ENCODE measurements at regions of chr5 and their contacts with region 1.

Region 1: DNA sequence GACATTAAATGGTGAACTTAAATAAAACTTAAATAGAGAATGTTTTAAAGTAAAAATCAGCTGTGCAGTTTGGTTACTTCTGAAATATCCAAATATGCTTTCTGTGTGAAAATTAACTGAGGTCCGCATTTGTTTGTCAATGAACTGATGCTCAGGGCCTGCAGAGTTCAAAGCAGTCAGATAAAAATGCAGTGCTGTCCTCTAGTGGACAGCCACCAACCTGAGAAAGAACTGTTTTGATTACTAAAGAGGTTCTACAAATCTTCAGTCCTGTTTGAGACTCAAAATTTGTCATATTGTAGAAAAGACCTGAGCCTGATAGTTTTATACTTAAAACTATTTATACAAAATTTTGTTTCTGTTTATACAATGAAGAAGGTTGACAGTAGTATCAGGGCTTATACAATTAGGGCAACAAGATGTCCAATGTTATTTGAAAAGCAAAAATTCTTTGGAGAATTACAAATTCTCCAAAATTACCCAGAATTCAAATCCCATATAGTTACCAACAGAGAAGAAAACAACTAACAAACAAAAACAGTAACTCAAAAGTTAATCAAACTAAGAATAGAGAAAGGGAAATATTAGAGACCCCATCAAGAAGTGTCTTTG is 232.3 kb upstream of the TBCA start:
- DNase-seq: peak in 1 of 2 experiments; percentile 38
- H3K4me3 ChIP-seq: no peak overlapping the region
- H3K4me3 Mint-ChIP-seq: no peak overlapping the region
- H3K27ac Mint-ChIP-seq: no peak overlapping the region
- H3K4me1 ChIP-seq: no peaks in the 10 kb centered on the region
- H3K4me1 Mint-ChIP-seq: no peaks in the 10 kb centered on the region
- H3K27me3 ChIP-seq: no peaks in the 10 kb centered on the region
- H3K27me3 Mint-ChIP-seq: no peaks in the 10 kb centered on the region
- CTCF ChIP-seq: peak; percentile 75 to 96

Region 2: GRCh38 chr5:77518304-77518703 is 490.2 kb before region 1 on chr5:
- CTCF ChIA-PET with region 1: no interaction called
- POLR2A ChIA-PET with region 1: no interaction called
- intact Hi-C with region 1: loop called (anchors 1 kb)
- DNase-seq: no peak
- H3K4me3 ChIP-seq: no peak overlapping the region
- H3K4me3 Mint-ChIP-seq: no peak overlapping the region
- H3K27ac Mint-ChIP-seq: no peak overlapping the region
- H3K4me1 ChIP-seq: no peaks in the 10 kb centered on the region
- H3K4me1 Mint-ChIP-seq: no peaks in the 10 kb centered on the region
- H3K27me3 ChIP-seq: no peaks in the 10 kb centered on the region
- H3K27me3 Mint-ChIP-seq: peaks cover 12% of the 10 kb centered on the region
- CTCF ChIP-seq: peak; percentile 33 to 51

Region 3: DNA sequence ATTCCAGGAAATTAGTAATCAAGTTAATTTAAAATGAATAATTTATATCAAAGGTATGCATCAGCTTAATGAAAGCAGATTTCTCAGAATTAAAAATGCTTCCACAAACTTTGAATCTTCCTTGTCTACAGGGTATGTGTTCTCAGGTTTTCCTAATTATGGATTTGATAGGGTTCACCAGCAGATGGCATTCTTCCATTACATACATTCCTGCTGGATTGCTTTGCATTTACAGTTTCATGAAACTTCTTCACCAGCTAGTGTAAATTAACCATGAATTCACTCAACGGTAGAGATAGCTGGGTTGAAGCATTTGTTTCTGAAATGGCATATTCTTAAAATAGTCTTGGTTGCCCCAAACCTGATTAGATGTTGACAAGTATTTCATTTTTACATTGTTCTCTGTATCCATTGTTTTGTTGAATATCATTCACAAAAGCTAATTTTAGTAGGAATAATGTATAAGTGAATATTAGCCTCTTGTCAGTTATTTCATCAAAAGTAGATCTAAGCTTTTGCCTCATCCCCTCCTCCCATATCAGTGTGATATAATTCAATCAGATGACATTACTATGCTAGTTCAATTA is 447.7 kb before region 1 on chr5:
- CTCF ChIA-PET with region 1: interaction called, 3 read pairs
- POLR2A ChIA-PET with region 1: no interaction called
- intact Hi-C with region 1: loop called (anchors 1 kb)
- DNase-seq: peak in 1 of 2 experiments; percentile 35
- H3K4me3 ChIP-seq: no peak overlapping the region
- H3K4me3 Mint-ChIP-seq: no peak overlapping the region
- H3K27ac Mint-ChIP-seq: no peak overlapping the region
- H3K4me1 ChIP-seq: 0 out of 2 replicates have a peak, but pooled peaks cover 4% of the 10 kb centered on the region
- H3K4me1 Mint-ChIP-seq: no peaks in the 10 kb centered on the region
- H3K27me3 ChIP-seq: no peaks in the 10 kb centered on the region; the same call in 1 of the 2 replicates
- H3K27me3 Mint-ChIP-seq: peaks cover 6% of the 10 kb centered on the region
- CTCF ChIP-seq: peak; percentile 56 to 73

Region 4: GRCh38 chr5:77645158-77645994 is 363.1 kb before region 1 on chr5:
- CTCF ChIA-PET with region 1: interaction called, 3 read pairs
- POLR2A ChIA-PET with region 1: no interaction called
- intact Hi-C with region 1: loop called (anchors 5 kb)
- DNase-seq: peak in 1 of 2 experiments; percentile 87
- H3K4me3 ChIP-seq: peak overlapping the region; percentile 43
- H3K4me3 Mint-ChIP-seq: peak overlapping the region; percentile 64
- H3K27ac Mint-ChIP-seq: no peak overlapping the region
- H3K4me1 ChIP-seq: peaks cover 10% of the 10 kb centered on the region; the same call in 1 of the 2 replicates
- H3K4me1 Mint-ChIP-seq: peaks cover 13% of the 10 kb centered on the region
- H3K27me3 ChIP-seq: no peaks in the 10 kb centered on the region; the same call in 1 of the 2 replicates
- H3K27me3 Mint-ChIP-seq: peaks cover 46% of the 10 kb centered on the region
- CTCF ChIP-seq: peak; percentile 34 to 53

Region 5: GRCh38 chr5:77718934-77719610 is 289.4 kb before region 1 on chr5:
- CTCF ChIA-PET with region 1: no interaction called
- POLR2A ChIA-PET with region 1: no interaction called
- intact Hi-C with region 1: no loop called
- DNase-seq: no peak
- H3K4me3 ChIP-seq: no peak overlapping the region
- H3K4me3 Mint-ChIP-seq: no peak overlapping the region
- H3K27ac Mint-ChIP-seq: no peak overlapping the region
- H3K4me1 ChIP-seq: no peaks in the 10 kb centered on the region
- H3K4me1 Mint-ChIP-seq: no peaks in the 10 kb centered on the region
- H3K27me3 ChIP-seq: no peaks in the 10 kb centered on the region
- H3K27me3 Mint-ChIP-seq: no peaks in the 10 kb centered on the region
- CTCF ChIP-seq: no peak

Region 6: DNA sequence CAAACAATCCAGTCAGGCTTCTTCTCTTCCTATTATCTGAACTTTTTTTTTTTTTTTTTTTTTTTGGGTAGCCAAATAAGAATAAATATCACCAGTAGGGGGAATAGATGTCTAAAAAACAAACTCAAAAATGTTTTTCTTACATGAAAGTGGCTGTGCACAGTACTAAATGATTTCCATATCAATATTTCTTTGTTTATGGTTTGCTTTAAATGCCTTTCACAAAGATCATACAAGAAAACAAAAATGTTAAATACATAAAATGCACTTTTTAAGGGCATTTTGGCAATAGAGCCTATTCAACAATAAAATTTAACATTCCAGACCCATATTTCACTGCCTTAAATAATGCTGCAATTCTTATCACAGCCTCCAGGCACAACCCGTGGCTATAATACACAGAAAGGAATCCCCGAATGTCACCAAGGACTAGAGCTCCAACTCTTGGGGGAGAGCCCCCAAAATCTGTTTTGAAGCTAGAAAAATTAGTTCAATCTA is 141.2 kb before region 1 on chr5:
- CTCF ChIA-PET with region 1: no interaction called
- POLR2A ChIA-PET with region 1: no interaction called
- intact Hi-C with region 1: loop called (anchors 1 kb)
- DNase-seq: no peak
- H3K4me3 ChIP-seq: no peak overlapping the region
- H3K4me3 Mint-ChIP-seq: no peak overlapping the region
- H3K27ac Mint-ChIP-seq: no peak overlapping the region
- H3K4me1 ChIP-seq: no peaks in the 10 kb centered on the region
- H3K4me1 Mint-ChIP-seq: no peaks in the 10 kb centered on the region
- H3K27me3 ChIP-seq: no peaks in the 10 kb centered on the region
- H3K27me3 Mint-ChIP-seq: no peaks in the 10 kb centered on the region
- CTCF ChIP-seq: peak in 1 of 2 experiments; percentile 12

Measured in Caco-2 (cell line).